CD4-positive, alpha-beta T cell (primary cell): ENCODE measurements at regions of chr5 and their contacts with region 1.

Region 1: GRCh38 chr5:14142827-14143548 is at the start of gene TRIO:
- DNase-seq: peak; percentile 49 to 86 (median 68)
- ATAC-seq: peak; percentile 58
- H3K4me3 ChIP-seq: peak within 1 kb of the TSS; percentile 60
- H3K4me3 Mint-ChIP-seq: peak within 1 kb of the TSS; percentile 93
- H3K27ac ChIP-seq: no peak within 1 kb of the TSS
- H3K27ac Mint-ChIP-seq: peak within 1 kb of the TSS; percentile 47
- H3K4me1 ChIP-seq: peaks cover 19% of the 10 kb centered on the region
- H3K4me1 Mint-ChIP-seq: peaks cover 14% of the 10 kb centered on the region
- H3K27me3 ChIP-seq: peaks cover 25 to 27% of the 10 kb centered on the region in 2 experiments
- H3K27me3 Mint-ChIP-seq: peaks cover 46% of the 10 kb centered on the region
- CTCF ChIP-seq: peak; percentile 29
- total RNA-seq, gene TRIO: 4.1 to 6.5 TPM

Region 2: GRCh38 chr5:14264604-14265316 is 121.8 kb after region 1 on chr5:
- CTCF ChIA-PET with region 1: no interaction called
- POLR2A ChIA-PET with region 1: no interaction called
- intact Hi-C with region 1: loop called in 1 of 2 experiments (anchors 10 kb)
- DNase-seq: peak; percentile 21 to 82 (median 60)
- ATAC-seq: peak; percentile 98
- H3K4me3 ChIP-seq: peak overlapping the region; percentile 23
- H3K4me3 Mint-ChIP-seq: peak overlapping the region; percentile 76
- H3K27ac ChIP-seq: no peak overlapping the region
- H3K27ac Mint-ChIP-seq: no peak overlapping the region
- H3K4me1 ChIP-seq: peaks cover 5% of the 10 kb centered on the region
- H3K4me1 Mint-ChIP-seq: peaks cover 6% of the 10 kb centered on the region
- H3K27me3 ChIP-seq: peaks cover 0 to 18% of the 10 kb centered on the region in 2 experiments
- H3K27me3 Mint-ChIP-seq: peaks cover 21% of the 10 kb centered on the region
- CTCF ChIP-seq: no peak

Region 3: GRCh38 chr5:14664302-14665100 is 521.5 kb after region 1 on chr5 and contains the start of gene OTULIN:
- CTCF ChIA-PET with region 1: no interaction called
- POLR2A ChIA-PET with region 1: no interaction called
- intact Hi-C with region 1: loop called in 1 of 2 experiments (anchors 10 kb)
- DNase-seq: peak; percentile 62 to 96 (median 80)
- ATAC-seq: peak; percentile 73
- H3K4me3 ChIP-seq: peak within 1 kb of the TSS; percentile 75
- H3K4me3 Mint-ChIP-seq: peak within 1 kb of the TSS; percentile 90
- H3K27ac ChIP-seq: peak within 1 kb of the TSS; percentile 77 to 82
- H3K27ac Mint-ChIP-seq: peak within 1 kb of the TSS; percentile 90
- H3K4me1 ChIP-seq: peaks cover 52% of the 10 kb centered on the region
- H3K4me1 Mint-ChIP-seq: peaks cover 77% of the 10 kb centered on the region
- H3K27me3 ChIP-seq: no peaks in the 10 kb centered on the region
- H3K27me3 Mint-ChIP-seq: no peaks in the 10 kb centered on the region
- CTCF ChIP-seq: no peak
- total RNA-seq, gene OTULIN: 69.4 to 77.0 TPM

Region 4: GRCh38 chr5:14849516-14850294 is 706.7 kb after region 1 on chr5:
- CTCF ChIA-PET with region 1: no interaction called
- POLR2A ChIA-PET with region 1: no interaction called
- intact Hi-C with region 1: loop called in 1 of 2 experiments (anchors 10 kb)
- DNase-seq: no peak
- ATAC-seq: no peak
- H3K4me3 ChIP-seq: no peak overlapping the region
- H3K4me3 Mint-ChIP-seq: no peak overlapping the region
- H3K27ac ChIP-seq: no peak overlapping the region
- H3K27ac Mint-ChIP-seq: no peak overlapping the region
- H3K4me1 ChIP-seq: no peaks in the 10 kb centered on the region
- H3K4me1 Mint-ChIP-seq: peaks cover 32% of the 10 kb centered on the region
- H3K27me3 ChIP-seq: no peaks in the 10 kb centered on the region
- H3K27me3 Mint-ChIP-seq: no peaks in the 10 kb centered on the region
- CTCF ChIP-seq: no peak

Region 5: GRCh38 chr5:14996997-14997396 is 854.0 kb after region 1 on chr5:
- CTCF ChIA-PET with region 1: no interaction called
- POLR2A ChIA-PET with region 1: no interaction called
- intact Hi-C with region 1: loop called in 1 of 2 experiments (anchors 5 kb)
- DNase-seq: peak in 3 of 14 experiments; percentile 24 to 53 (median 44)
- ATAC-seq: no peak
- H3K4me3 ChIP-seq: no peak overlapping the region
- H3K4me3 Mint-ChIP-seq: no peak overlapping the region
- H3K27ac ChIP-seq: no peak overlapping the region
- H3K27ac Mint-ChIP-seq: no peak overlapping the region
- H3K4me1 ChIP-seq: peaks cover 10% of the 10 kb centered on the region
- H3K4me1 Mint-ChIP-seq: peaks cover 13% of the 10 kb centered on the region
- H3K27me3 ChIP-seq: peaks cover 0 to 7% of the 10 kb centered on the region in 2 experiments
- H3K27me3 Mint-ChIP-seq: no peaks in the 10 kb centered on the region
- CTCF ChIP-seq: no peak